K562 (cell line): ENCODE measurements at regions of chr12 and their contacts with region 1.

Region 1: GRCh38 chr12:27969624-27970400 is 2.7 kb downstream of the PTHLH start:
- DNase-seq: peak; percentile 48 to 85 (median 56)
- ATAC-seq: peak; percentile 93
- H3K4me3 ChIP-seq: peak overlapping the region; percentile 50
- H3K27ac ChIP-seq: peak overlapping the region; percentile 59; the same call in 2 of the 3 replicates
- H3K4me1 ChIP-seq: peaks cover 2 to 19% of the 10 kb centered on the region in 2 experiments; a peak in 3 of 5 replicates
- H3K27me3 ChIP-seq: peaks cover 0 to 7% of the 10 kb centered on the region in 2 experiments; a peak in 1 of 5 replicates
- CTCF ChIP-seq: peak; percentile 20 to 57 (median 46); a peak in 4 of 6 replicates
- EP300 ChIP-seq: no peak
- POLR2A ChIP-seq: no peak; the same call in 1 of the 2 replicates
- RAD21 ChIP-seq: peak; percentile 49 to 64; a peak in 3 of 4 replicates

Region 2: GRCh38 chr12:28177905-28178304 is 208.1 kb after region 1 on chr12:
- CTCF ChIA-PET with region 1: no interaction called
- POLR2A ChIA-PET with region 1: no interaction called
- in situ Hi-C with region 1: loop called (anchors 10 kb)
- intact Hi-C with region 1: loop called (anchors 1 kb)
- DNase-seq: no peak
- ATAC-seq: no peak
- H3K4me3 ChIP-seq: no peak overlapping the region
- H3K27ac ChIP-seq: no peak overlapping the region
- H3K4me1 ChIP-seq: no peaks in the 10 kb centered on the region
- H3K27me3 ChIP-seq: no peaks in the 10 kb centered on the region
- CTCF ChIP-seq: no peak
- EP300 ChIP-seq: no peak
- POLR2A ChIP-seq: no peak
- RAD21 ChIP-seq: no peak

Region 3: DNA sequence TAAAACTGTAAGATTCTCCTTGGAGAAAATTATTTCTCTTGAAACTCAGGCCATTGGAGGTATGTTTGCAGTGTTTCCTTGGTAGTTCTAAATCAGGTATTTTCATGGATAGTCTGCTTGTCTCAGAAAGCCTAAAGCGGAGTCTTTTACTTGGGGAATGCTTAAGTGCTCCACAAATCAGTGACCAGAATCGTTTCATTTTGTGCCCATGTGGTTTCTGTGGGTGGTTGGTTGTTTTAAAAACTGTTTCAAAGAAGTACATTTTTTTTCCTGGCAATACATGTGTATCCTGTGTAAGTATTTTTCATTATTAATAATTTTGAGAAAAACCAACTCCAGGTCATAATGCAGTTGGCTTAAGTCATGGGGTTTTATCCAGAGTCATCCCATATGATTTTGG is 254.0 kb after region 1 on chr12:
- CTCF ChIA-PET with region 1: no interaction called
- POLR2A ChIA-PET with region 1: no interaction called
- in situ Hi-C with region 1: no loop called
- intact Hi-C with region 1: no loop called
- DNase-seq: no peak
- ATAC-seq: no peak
- H3K4me3 ChIP-seq: no peak overlapping the region
- H3K27ac ChIP-seq: no peak overlapping the region
- H3K4me1 ChIP-seq: peaks cover 4 to 12% of the 10 kb centered on the region in 2 experiments; a peak in 2 of 5 replicates
- H3K27me3 ChIP-seq: no peaks in the 10 kb centered on the region
- CTCF ChIP-seq: no peak
- EP300 ChIP-seq: no peak
- POLR2A ChIP-seq: no peak
- RAD21 ChIP-seq: no peak